Natural killer cell (primary cell): ENCODE measurements at regions of chr19 and their contacts with region 1.

Region 1: GRCh38 chr19:35899547-35900214 is 659 bp downstream of the NFKBID start:
- DNase-seq: peak; percentile 84 to 97
- ATAC-seq: peak; percentile 50 to 75 (median 59)
- H3K4me3 ChIP-seq: peak overlapping the region; percentile 74
- H3K4me3 Mint-ChIP-seq: peak overlapping the region; percentile 92
- H3K27ac ChIP-seq: peak overlapping the region; percentile 97
- H3K27ac Mint-ChIP-seq: peak overlapping the region; percentile 90 to 97
- H3K4me1 ChIP-seq: peaks cover 74% of the 10 kb centered on the region
- H3K4me1 Mint-ChIP-seq: peaks cover 43 to 74% of the 10 kb centered on the region in 2 donors
- H3K27me3 ChIP-seq: no peaks in the 10 kb centered on the region
- H3K27me3 Mint-ChIP-seq: no peaks in the 10 kb centered on the region
- CTCF ChIP-seq: no peak

Region 2: DNA sequence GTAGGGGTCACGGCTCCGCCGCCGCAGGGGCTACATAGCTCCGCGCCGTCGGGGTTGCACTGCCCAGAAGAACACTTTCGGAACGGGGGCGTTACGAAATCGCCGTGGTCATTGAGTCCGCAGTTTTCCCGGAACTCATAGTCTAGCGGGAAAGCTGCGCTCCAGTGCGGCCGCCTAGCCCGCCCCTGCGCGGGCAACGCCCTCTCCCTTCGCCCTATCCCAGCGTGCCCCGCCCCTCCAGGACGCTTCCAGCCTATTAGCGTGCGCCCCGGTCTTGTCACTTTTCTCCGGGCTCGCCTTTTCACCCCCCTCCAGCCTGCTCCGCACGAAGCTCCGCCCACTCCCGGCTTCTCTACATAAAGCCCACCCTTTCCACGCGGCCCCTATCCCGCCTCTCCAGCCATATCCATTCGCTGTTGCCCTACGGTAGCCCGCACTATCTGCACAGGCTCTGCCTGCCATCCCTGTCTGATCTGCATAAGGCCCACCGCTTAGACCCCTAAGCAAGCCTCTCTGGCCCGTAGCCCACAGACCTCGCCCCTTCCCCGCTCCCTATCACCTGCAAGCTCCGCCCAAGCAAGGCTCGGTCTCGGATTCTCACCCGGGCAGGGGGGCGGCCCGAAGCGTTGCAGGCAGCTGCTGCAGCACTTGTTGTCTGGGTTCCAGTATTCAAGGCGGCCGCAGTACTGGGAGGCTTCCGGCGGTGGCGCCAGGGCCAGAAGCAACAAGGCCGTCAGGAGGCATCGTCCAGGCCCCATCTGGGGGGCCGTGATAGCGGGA is 159.1 kb before region 1 on chr19:
- intact Hi-C with region 1: loop called (anchors 10 kb)
- DNase-seq: peak; percentile 91 to 97
- ATAC-seq: peak; percentile 66 to 84 (median 69)
- H3K4me3 ChIP-seq: peak overlapping the region; percentile 67
- H3K4me3 Mint-ChIP-seq: peak overlapping the region; percentile 94
- H3K27ac ChIP-seq: peak overlapping the region; percentile 62
- H3K27ac Mint-ChIP-seq: peak overlapping the region; percentile 96 to 99
- H3K4me1 ChIP-seq: peaks cover 51% of the 10 kb centered on the region
- H3K4me1 Mint-ChIP-seq: peaks cover 28 to 54% of the 10 kb centered on the region in 2 donors
- H3K27me3 ChIP-seq: no peaks in the 10 kb centered on the region
- H3K27me3 Mint-ChIP-seq: no peaks in the 10 kb centered on the region
- CTCF ChIP-seq: no peak

Region 3: DNA sequence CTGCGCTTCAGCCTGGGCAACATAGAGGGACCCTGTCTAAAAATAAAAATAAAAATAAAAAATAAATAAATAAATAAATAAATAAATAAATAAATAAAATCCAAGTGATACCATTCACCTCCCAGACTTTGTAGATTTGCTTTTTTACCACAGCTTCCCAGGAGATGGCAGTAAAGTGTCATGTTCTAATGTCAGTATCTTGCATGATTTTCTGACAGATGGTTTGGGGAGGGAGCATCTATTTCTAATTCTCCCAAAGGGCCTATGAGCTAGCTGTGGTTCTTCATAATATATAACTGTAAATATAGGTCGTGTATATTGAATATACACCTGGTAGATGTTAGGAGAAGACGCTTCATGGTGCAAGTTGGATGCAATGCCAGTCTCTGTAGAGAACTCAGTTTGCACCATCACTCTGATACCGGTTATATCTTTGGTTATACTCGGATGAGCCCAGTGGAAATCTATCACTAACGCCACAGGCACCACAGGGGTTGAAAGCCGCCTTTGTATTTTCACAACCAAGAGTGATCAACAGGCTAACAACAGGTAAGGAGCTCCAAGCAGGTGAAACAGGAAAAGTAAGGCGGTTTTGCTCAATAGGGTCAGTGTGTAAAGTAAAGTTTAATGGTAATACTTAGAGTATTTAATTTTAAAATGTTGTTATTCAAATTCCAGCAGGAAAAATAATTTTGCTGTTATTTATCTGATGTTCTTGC is 17.4 kb before region 1 on chr19:
- intact Hi-C with region 1: loop called (anchors 2 kb)
- DNase-seq: peak in 1 of 2 donors; percentile 84
- ATAC-seq: peak; percentile 53 to 88 (median 71)
- H3K4me3 ChIP-seq: no peak overlapping the region
- H3K4me3 Mint-ChIP-seq: peak overlapping the region; percentile 9
- H3K27ac ChIP-seq: no peak overlapping the region
- H3K27ac Mint-ChIP-seq: peak overlapping the region in 1 of 2 donors; percentile 67
- H3K4me1 ChIP-seq: peaks cover 3% of the 10 kb centered on the region
- H3K4me1 Mint-ChIP-seq: peaks cover 12% of the 10 kb centered on the region in 2 donors
- H3K27me3 ChIP-seq: peaks cover 14% of the 10 kb centered on the region
- H3K27me3 Mint-ChIP-seq: peaks cover 21 to 22% of the 10 kb centered on the region in 2 donors
- CTCF ChIP-seq: peak; percentile 68

Region 4: GRCh38 chr19:35949131-35949530 is 49.5 kb after region 1 on chr19:
- intact Hi-C with region 1: no loop called
- DNase-seq: no peak
- ATAC-seq: no peak
- H3K4me3 ChIP-seq: no peak overlapping the region
- H3K4me3 Mint-ChIP-seq: no peak overlapping the region
- H3K27ac ChIP-seq: no peak overlapping the region
- H3K27ac Mint-ChIP-seq: peak overlapping the region in 1 of 2 donors; percentile 68
- H3K4me1 ChIP-seq: peaks cover 30% of the 10 kb centered on the region
- H3K4me1 Mint-ChIP-seq: peaks cover 20 to 40% of the 10 kb centered on the region in 2 donors
- H3K27me3 ChIP-seq: no peaks in the 10 kb centered on the region
- H3K27me3 Mint-ChIP-seq: no peaks in the 10 kb centered on the region
- CTCF ChIP-seq: no peak

Region 5: GRCh38 chr19:35986664-35987570 is 87.2 kb after region 1 on chr19:
- intact Hi-C with region 1: no loop called
- DNase-seq: peak in 1 of 2 donors; percentile 37
- ATAC-seq: peak in 2 of 3 donors; percentile 38 to 53
- H3K4me3 ChIP-seq: no peak overlapping the region
- H3K4me3 Mint-ChIP-seq: peak overlapping the region; percentile 65
- H3K27ac ChIP-seq: no peak overlapping the region
- H3K27ac Mint-ChIP-seq: no peak overlapping the region
- H3K4me1 ChIP-seq: peaks cover 9% of the 10 kb centered on the region
- H3K4me1 Mint-ChIP-seq: peaks cover 0 to 8% of the 10 kb centered on the region in 2 donors
- H3K27me3 ChIP-seq: peaks cover 15% of the 10 kb centered on the region
- H3K27me3 Mint-ChIP-seq: peaks cover 32 to 47% of the 10 kb centered on the region in 2 donors
- CTCF ChIP-seq: no peak